ENCODE measurements at regions of chr7 and their contacts with region 1.

Region 1: GRCh38 chr7:75814407-75814947 is 871 bp upstream of the CCL24 start:
- DNase-seq: no peak
- ATAC-seq: no peak
- H3K4me3 ChIP-seq: no peak overlapping the region
- H3K27ac ChIP-seq: no peak overlapping the region
- H3K4me1 ChIP-seq: peaks cover 11 to 16% of the 10 kb centered on the region in 2 experiments
- H3K27me3 ChIP-seq: no peaks in the 10 kb centered on the region; a peak in 2 of 5 replicates
- CTCF ChIP-seq: no peak
- EP300 ChIP-seq: no peak
- POLR2A ChIP-seq: no peak
- RAD21 ChIP-seq: no peak

Region 2: GRCh38 chr7:75611548-75612178 is 202.8 kb before region 1 on chr7:
- CTCF ChIA-PET with region 1: no interaction called
- POLR2A ChIA-PET with region 1: no interaction called
- in situ Hi-C with region 1: no loop called
- intact Hi-C with region 1: no loop called
- DNase-seq: no peak
- ATAC-seq: peak; percentile 24
- H3K4me3 ChIP-seq: no peak overlapping the region
- H3K27ac ChIP-seq: no peak overlapping the region
- H3K4me1 ChIP-seq: peaks cover 0 to 8% of the 10 kb centered on the region in 2 experiments; a peak in 2 of 5 replicates
- H3K27me3 ChIP-seq: no peaks in the 10 kb centered on the region
- CTCF ChIP-seq: no peak
- EP300 ChIP-seq: no peak
- POLR2A ChIP-seq: no peak
- RAD21 ChIP-seq: no peak

Region 3: GRCh38 chr7:75798770-75799169 is 15.7 kb before region 1 on chr7:
- CTCF ChIA-PET with region 1: no interaction called
- POLR2A ChIA-PET with region 1: interaction called, 3 read pairs
- in situ Hi-C with region 1: no loop called
- intact Hi-C with region 1: loop called (anchors 1 kb)
- DNase-seq: peak in 2 of 4 experiments; percentile 57 to 69
- ATAC-seq: peak; percentile 35
- H3K4me3 ChIP-seq: no peak overlapping the region
- H3K27ac ChIP-seq: no peak overlapping the region
- H3K4me1 ChIP-seq: peaks cover 23 to 43% of the 10 kb centered on the region in 2 experiments
- H3K27me3 ChIP-seq: no peaks in the 10 kb centered on the region
- CTCF ChIP-seq: peak in 1 of 3 experiments; percentile 22; a peak in 1 of 6 replicates
- EP300 ChIP-seq: peak; percentile 74
- POLR2A ChIP-seq: no peak
- RAD21 ChIP-seq: peak in 1 of 2 experiments; percentile 28; a peak in 1 of 4 replicates

Region 4: DNA sequence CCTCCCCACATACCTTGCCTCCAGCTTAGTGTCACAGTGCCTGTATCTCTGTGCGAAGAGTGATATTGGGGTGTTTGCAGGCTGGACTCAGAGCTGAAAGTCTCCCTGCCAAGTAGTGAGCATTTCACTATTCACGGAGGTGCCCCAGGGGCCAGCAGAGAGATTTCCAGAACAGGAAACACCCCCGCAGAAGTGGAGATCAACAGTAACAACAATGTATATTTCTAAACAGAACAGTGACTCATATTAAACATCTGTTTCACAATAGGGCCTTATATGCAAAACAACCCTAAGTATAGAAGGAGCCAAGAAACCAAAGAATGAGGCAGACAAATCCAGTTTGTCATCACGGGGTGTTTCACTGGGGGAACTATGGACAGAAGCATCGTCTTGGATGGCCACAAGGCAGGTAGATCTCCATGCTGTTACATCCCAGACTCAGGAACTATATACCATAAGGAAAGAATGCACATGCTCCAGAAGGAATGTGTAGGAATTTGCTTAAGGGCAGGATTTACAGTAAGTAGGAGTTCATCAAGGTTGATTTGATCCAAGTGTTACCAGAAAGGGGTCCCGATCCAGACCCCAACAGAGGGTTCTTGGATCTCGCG is 28.5 kb after region 1 on chr7:
- CTCF ChIA-PET with region 1: no interaction called
- POLR2A ChIA-PET with region 1: interaction called, 3 read pairs
- in situ Hi-C with region 1: no loop called
- intact Hi-C with region 1: loop called (anchors 2 kb)
- DNase-seq: peak; percentile 61 to 71 (median 65)
- ATAC-seq: peak; percentile 77
- H3K4me3 ChIP-seq: peak overlapping the region; percentile 20
- H3K27ac ChIP-seq: peak overlapping the region; percentile 82
- H3K4me1 ChIP-seq: peaks cover 13 to 20% of the 10 kb centered on the region in 2 experiments
- H3K27me3 ChIP-seq: no peaks in the 10 kb centered on the region
- CTCF ChIP-seq: no peak
- EP300 ChIP-seq: peak; percentile 70; the same call in 1 of the 2 replicates
- POLR2A ChIP-seq: peak; percentile 87
- RAD21 ChIP-seq: no peak

Measured in K562 (cell line).